Caco-2 (cell line): ENCODE measurements at regions of chr13 and their contacts with region 1.

Region 1: GRCh38 chr13:70310396-70311119 is 202.3 kb upstream of the KLHL1 start:
- DNase-seq: peak; percentile 62
- H3K4me3 ChIP-seq: no peak overlapping the region
- H3K4me3 Mint-ChIP-seq: no peak overlapping the region
- H3K27ac Mint-ChIP-seq: no peak overlapping the region
- H3K4me1 ChIP-seq: peaks cover 7% of the 10 kb centered on the region; the same call in 1 of the 2 replicates
- H3K4me1 Mint-ChIP-seq: peaks cover 5% of the 10 kb centered on the region
- H3K27me3 ChIP-seq: no peaks in the 10 kb centered on the region
- H3K27me3 Mint-ChIP-seq: no peaks in the 10 kb centered on the region
- CTCF ChIP-seq: peak; percentile 58 to 61

Region 2: DNA sequence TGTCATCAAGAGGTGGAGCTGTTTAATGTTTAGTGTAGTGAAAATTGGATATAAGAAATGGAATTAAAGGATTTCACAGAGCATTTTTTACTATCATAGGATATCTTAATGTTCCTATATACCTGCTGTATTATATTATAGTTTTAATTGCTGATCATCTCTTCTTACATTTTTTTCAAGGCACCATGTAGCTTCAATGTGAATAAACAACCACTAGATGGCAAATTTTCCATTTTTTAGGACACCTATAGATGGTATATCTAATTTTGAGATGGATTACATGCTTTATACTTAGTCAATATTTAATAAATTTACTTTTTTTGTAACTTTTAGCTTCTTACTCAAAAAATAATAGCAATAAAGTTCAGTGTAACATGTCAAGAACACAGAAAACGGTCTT is 211.9 kb before region 1 on chr13:
- CTCF ChIA-PET with region 1: interaction called, 4 read pairs
- POLR2A ChIA-PET with region 1: no interaction called
- intact Hi-C with region 1: loop called (anchors 1 kb)
- DNase-seq: peak in 1 of 2 experiments; percentile 7
- H3K4me3 ChIP-seq: no peak overlapping the region
- H3K4me3 Mint-ChIP-seq: no peak overlapping the region
- H3K27ac Mint-ChIP-seq: no peak overlapping the region
- H3K4me1 ChIP-seq: no peaks in the 10 kb centered on the region
- H3K4me1 Mint-ChIP-seq: no peaks in the 10 kb centered on the region
- H3K27me3 ChIP-seq: no peaks in the 10 kb centered on the region
- H3K27me3 Mint-ChIP-seq: no peaks in the 10 kb centered on the region
- CTCF ChIP-seq: peak; percentile 46 to 47

Region 3: GRCh38 chr13:70249332-70250064 is 61.1 kb before region 1 on chr13:
- CTCF ChIA-PET with region 1: no interaction called
- POLR2A ChIA-PET with region 1: no interaction called
- intact Hi-C with region 1: loop called (anchors 1 kb)
- DNase-seq: peak; percentile 36 to 46
- H3K4me3 ChIP-seq: no peak overlapping the region
- H3K4me3 Mint-ChIP-seq: no peak overlapping the region
- H3K27ac Mint-ChIP-seq: no peak overlapping the region
- H3K4me1 ChIP-seq: peaks cover 11% of the 10 kb centered on the region; the same call in 1 of the 2 replicates
- H3K4me1 Mint-ChIP-seq: peaks cover 8% of the 10 kb centered on the region
- H3K27me3 ChIP-seq: no peaks in the 10 kb centered on the region
- H3K27me3 Mint-ChIP-seq: no peaks in the 10 kb centered on the region
- CTCF ChIP-seq: no peak